Astrocyte of the cerebellum (primary cell): ENCODE measurements at regions of chr14 and their contacts with region 1.

Region 1: DNA sequence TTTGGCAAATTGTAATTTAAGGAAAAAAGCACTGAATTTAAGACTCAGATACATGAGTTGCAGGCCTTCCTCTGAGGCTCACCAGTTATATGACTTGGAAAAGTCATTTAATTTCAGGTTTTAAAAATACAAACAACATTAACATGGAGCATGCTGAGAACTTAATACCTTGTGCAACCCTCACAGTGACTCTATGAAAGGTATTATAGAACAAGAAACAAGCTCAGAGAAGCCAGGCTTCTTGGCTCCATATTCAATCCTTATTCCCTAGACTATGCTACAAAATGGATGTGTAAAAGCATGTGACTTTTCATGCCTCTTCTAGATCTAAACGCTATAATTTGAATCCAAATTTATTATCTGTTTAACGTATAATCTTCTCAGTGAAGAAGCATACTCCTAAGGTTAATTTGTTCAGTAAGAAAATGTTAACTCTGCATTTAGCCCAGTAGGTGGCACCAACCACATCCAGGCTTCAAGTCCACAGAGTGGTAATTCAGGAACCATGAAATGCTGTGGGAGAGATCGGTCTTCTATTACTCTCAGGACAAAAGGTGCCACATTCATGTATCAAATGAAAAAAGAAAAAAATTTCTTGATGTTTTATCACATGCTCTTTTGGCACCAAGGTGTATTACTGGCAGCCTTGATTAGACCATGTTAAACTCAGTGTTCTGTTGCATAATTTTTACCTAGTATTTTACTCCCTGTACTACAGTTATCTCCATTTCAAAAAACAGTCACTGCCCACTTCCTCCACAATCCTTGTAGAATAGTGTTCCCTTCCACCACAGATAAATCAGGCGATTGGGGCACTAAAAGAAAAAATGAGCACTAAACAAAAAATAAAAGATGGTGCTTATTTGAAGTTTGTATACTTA is 9.3 kb downstream of the CCDC196 start:
- DNase-seq: peak; percentile 66
- H3K4me3 ChIP-seq: no peak overlapping the region
- CTCF ChIP-seq: peak; percentile 83

Region 2: GRCh38 chr14:66539034-66539433 is 43.6 kb after region 1 on chr14:
- in situ Hi-C with region 1: no loop called
- DNase-seq: no peak
- H3K4me3 ChIP-seq: no peak overlapping the region
- CTCF ChIP-seq: no peak

Region 3: DNA sequence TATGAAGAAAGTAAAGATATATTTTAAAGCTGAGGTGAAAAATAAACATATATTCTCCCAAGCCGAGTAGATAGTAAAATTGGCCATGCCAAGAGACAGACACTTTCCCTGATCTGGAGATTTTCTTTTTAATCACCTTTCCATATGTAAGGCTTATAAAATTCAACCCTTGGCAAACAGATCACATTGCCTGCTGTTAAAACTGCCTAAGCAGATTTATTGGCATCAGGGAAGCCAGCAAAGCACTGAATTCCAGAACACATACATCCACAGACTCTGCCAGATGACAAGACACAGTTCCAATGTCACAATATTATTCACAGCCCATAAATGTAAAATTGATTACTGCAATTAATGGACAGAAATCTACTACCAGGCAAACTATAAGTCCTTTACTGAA is 615.6 kb after region 1 on chr14:
- in situ Hi-C with region 1: loop called (anchors 25 kb)
- DNase-seq: no peak
- H3K4me3 ChIP-seq: no peak overlapping the region
- CTCF ChIP-seq: no peak